Activated CD4-positive, alpha-beta T cell treated with anti-CD3 and anti-CD28 coated beads for 36 hours (primary cell): ENCODE measurements at regions of chr1 and their contacts with region 1.

Region 1: GRCh38 chr1:246931549-246932365 is at the start of gene AHCTF1:
- DNase-seq: peak; percentile 96
- ATAC-seq: peak; percentile 94
- H3K4me3 Mint-ChIP-seq: peak within 1 kb of the TSS; percentile 97
- H3K27ac Mint-ChIP-seq: peak within 1 kb of the TSS; percentile 94
- H3K4me1 Mint-ChIP-seq: peaks cover 28% of the 10 kb centered on the region
- H3K27me3 Mint-ChIP-seq: no peaks in the 10 kb centered on the region
- total RNA-seq, gene AHCTF1: 38.8 to 54.4 TPM

Region 2: GRCh38 chr1:246506674-246507481 is 424.9 kb before region 1 on chr1 and contains the start of gene SMYD3:
- CTCF ChIA-PET with region 1: no interaction called
- POLR2A ChIA-PET with region 1: no interaction called
- intact Hi-C with region 1: loop called in 1 of 2 experiments (anchors 1 kb)
- DNase-seq: peak; percentile 84
- ATAC-seq: peak; percentile 93
- H3K4me3 Mint-ChIP-seq: peak within 1 kb of the TSS; percentile 78
- H3K27ac Mint-ChIP-seq: peak within 1 kb of the TSS; percentile 89
- H3K4me1 Mint-ChIP-seq: peaks cover 26% of the 10 kb centered on the region
- H3K27me3 Mint-ChIP-seq: no peaks in the 10 kb centered on the region
- total RNA-seq, gene SMYD3: 17.2 to 18.4 TPM

Region 3: GRCh38 chr1:246875041-246876026 is 56.4 kb before region 1 on chr1:
- CTCF ChIA-PET with region 1: no interaction called
- POLR2A ChIA-PET with region 1: no interaction called
- intact Hi-C with region 1: loop called in 1 of 2 experiments (anchors 2 kb)
- DNase-seq: peak; percentile 36
- ATAC-seq: peak; percentile 99
- H3K4me3 Mint-ChIP-seq: no peak overlapping the region
- H3K27ac Mint-ChIP-seq: peak overlapping the region; percentile 52
- H3K4me1 Mint-ChIP-seq: peaks cover 22% of the 10 kb centered on the region
- H3K27me3 Mint-ChIP-seq: no peaks in the 10 kb centered on the region

Region 4: GRCh38 chr1:247103859-247104591 is 172.3 kb after region 1 on chr1 and contains the start of gene ZNF669:
- CTCF ChIA-PET with region 1: no interaction called
- POLR2A ChIA-PET with region 1: no interaction called
- intact Hi-C with region 1: loop called (anchors 1 to 5 kb)
- DNase-seq: peak; percentile 97
- ATAC-seq: peak; percentile 100
- H3K4me3 Mint-ChIP-seq: peak within 1 kb of the TSS; percentile 86
- H3K27ac Mint-ChIP-seq: peak within 1 kb of the TSS; percentile 90
- H3K4me1 Mint-ChIP-seq: peaks cover 19% of the 10 kb centered on the region
- H3K27me3 Mint-ChIP-seq: peaks cover 16% of the 10 kb centered on the region
- total RNA-seq, gene ZNF669: 6.9 to 8.8 TPM

Region 5: DNA sequence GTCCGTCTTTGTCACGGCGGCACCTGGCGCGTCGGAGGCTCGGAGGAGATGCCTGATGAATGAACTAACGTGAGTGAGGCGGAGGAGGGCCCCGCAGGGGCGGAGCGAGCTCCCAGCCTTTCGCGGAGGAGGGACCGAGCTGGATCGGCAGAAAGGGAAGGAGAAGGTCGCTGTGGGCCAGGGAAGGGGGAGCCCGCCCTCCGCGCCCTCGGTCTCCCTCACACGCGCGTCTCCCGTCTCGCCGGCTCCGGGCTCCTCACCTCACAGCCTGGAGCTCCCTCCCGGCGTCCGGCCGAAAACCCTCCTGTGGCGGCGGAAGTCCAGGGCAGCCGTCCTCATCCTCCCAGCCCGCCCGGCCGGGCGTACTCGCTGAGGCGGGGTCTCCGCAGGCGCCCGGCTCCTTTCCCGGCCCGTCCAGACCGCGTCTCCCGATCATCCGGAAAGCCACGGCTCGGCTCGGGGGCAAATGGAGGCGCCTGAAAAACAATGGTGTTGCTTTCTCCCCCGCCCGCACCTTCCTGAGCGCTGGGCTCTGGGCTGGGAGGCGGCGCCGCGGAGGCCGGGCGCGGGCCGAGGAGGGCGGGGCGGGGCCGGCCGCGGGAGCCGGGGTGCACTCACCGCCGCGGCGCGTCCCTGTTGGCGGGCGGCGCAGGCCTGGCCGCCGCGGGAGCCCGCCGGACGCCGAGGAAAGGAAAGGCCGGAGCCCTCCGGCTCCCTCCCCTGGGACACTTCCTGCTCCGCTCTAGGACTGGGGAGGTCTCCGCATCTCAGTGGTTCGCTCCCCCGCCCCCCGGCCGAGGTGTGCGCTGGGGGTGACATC is 399.6 kb after region 1 on chr1 and contains the start of gene ZNF496:
- CTCF ChIA-PET with region 1: no interaction called
- POLR2A ChIA-PET with region 1: no interaction called
- intact Hi-C with region 1: loop called (anchors 1 to 5 kb)
- DNase-seq: peak; percentile 86
- ATAC-seq: peak; percentile 82
- H3K4me3 Mint-ChIP-seq: peak within 1 kb of the TSS; percentile 78
- H3K27ac Mint-ChIP-seq: peak within 1 kb of the TSS; percentile 76
- H3K4me1 Mint-ChIP-seq: peaks cover 12% of the 10 kb centered on the region
- H3K27me3 Mint-ChIP-seq: no peaks in the 10 kb centered on the region
- total RNA-seq, gene ZNF496: 9.3 to 9.5 TPM